Panc1 (cell line): ENCODE measurements at regions of chr10 and their contacts with region 1.

Region 1: DNA sequence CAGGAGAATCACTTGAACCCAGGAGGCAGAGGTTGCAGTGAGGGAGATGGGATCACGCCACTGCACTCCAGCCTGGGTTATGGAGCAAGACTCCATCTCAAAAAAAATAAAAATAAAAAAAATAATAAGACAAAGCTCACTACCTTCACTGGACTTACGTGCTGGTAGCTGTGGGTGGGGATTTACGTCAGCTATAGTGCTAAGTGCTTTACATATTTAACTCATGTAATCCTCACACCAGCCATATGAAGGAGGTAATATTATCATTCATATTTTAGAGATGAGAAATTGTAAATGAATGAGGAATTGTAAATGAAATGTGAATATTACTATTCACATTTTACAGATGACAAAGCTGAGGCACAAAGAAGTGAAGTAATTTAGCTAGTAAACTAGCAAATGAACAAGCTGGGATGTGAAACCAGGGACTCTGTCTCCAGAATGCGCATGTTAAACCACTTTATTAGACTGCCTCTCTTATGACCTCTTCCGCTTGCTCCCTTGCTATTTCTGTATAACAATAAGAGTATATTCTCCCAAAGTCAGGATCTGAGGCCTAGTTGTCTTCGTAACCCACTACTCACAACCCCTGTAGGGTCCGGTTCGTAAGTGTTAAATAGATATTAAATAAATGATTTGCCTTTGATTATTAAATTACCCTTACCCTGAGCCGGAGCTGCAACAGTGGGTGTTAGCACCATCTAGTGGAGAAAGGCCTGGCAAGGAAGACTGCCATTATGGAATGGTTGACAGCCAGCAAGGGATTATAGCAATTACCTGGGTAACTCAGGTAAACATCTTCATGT is 70.2 kb downstream of the HTR7 start:
- DNase-seq: peak; percentile 18
- ATAC-seq: peak; percentile 92
- H3K4me3 ChIP-seq: no peak overlapping the region
- H3K27ac ChIP-seq: no peak overlapping the region
- H3K4me1 ChIP-seq: no peaks in the 10 kb centered on the region
- H3K27me3 ChIP-seq: peaks cover 24% of the 10 kb centered on the region
- CTCF ChIP-seq: peak; percentile 93

Region 2: GRCh38 chr10:89793649-89794254 is 993.8 kb before region 1 on chr10:
- CTCF ChIA-PET with region 1: no interaction called
- POLR2A ChIA-PET with region 1: no interaction called
- in situ Hi-C with region 1: no loop called
- intact Hi-C with region 1: loop called (anchors 1 kb)
- DNase-seq: peak; percentile 60
- ATAC-seq: peak; percentile 93
- H3K4me3 ChIP-seq: no peak overlapping the region
- H3K27ac ChIP-seq: no peak overlapping the region
- H3K4me1 ChIP-seq: no peaks in the 10 kb centered on the region
- H3K27me3 ChIP-seq: no peaks in the 10 kb centered on the region
- CTCF ChIP-seq: peak; percentile 87

Region 3: GRCh38 chr10:89954787-89955566 is 832.6 kb before region 1 on chr10:
- CTCF ChIA-PET with region 1: no interaction called
- POLR2A ChIA-PET with region 1: no interaction called
- in situ Hi-C with region 1: no loop called
- intact Hi-C with region 1: loop called (anchors 10 kb)
- DNase-seq: no peak
- ATAC-seq: no peak
- H3K4me3 ChIP-seq: no peak overlapping the region
- H3K27ac ChIP-seq: no peak overlapping the region
- H3K4me1 ChIP-seq: no peaks in the 10 kb centered on the region
- H3K27me3 ChIP-seq: 0 out of 2 replicates have a peak, but pooled peaks cover 2% of the 10 kb centered on the region
- CTCF ChIP-seq: peak; percentile 47; the same call in 1 of the 2 replicates

Region 4: GRCh38 chr10:90751107-90751997 is 36.2 kb before region 1 on chr10:
- CTCF ChIA-PET with region 1: interaction called, 3 read pairs
- POLR2A ChIA-PET with region 1: no interaction called
- in situ Hi-C with region 1: no loop called
- intact Hi-C with region 1: loop called (anchors 1 kb)
- DNase-seq: peak; percentile 38
- ATAC-seq: peak; percentile 95
- H3K4me3 ChIP-seq: no peak overlapping the region
- H3K27ac ChIP-seq: no peak overlapping the region
- H3K4me1 ChIP-seq: no peaks in the 10 kb centered on the region
- H3K27me3 ChIP-seq: peaks cover 2% of the 10 kb centered on the region
- CTCF ChIP-seq: peak; percentile 85